ENCODE measurements at regions of chr14 and their contacts with region 1.

Region 1: GRCh38 chr14:55026793-55027561 is at the starts of genes SOCS4 and WDHD1:
- DNase-seq: peak; percentile 82
- ATAC-seq: peak; percentile 84
- H3K4me3 ChIP-seq: peak within 1 kb of the TSS; percentile 78
- H3K27ac ChIP-seq: peak within 1 kb of the TSS; percentile 91
- H3K4me1 ChIP-seq: no peaks in the 10 kb centered on the region
- H3K27me3 ChIP-seq: no peaks in the 10 kb centered on the region
- CTCF ChIP-seq: 0 out of 6 replicates have a peak, but pooled peaks of 1 of the 3 experiments have one; percentile 1
- EP300 ChIP-seq: no peak; a peak in 2 of 4 replicates
- POLR2A ChIP-seq: peak; percentile 96
- RAD21 ChIP-seq: no peak
- polyA plus RNA-seq, gene SOCS4: 5.7 to 7.6 TPM
- polyA plus RNA-seq, gene WDHD1: 11.3 to 14.8 TPM

Region 2: GRCh38 chr14:54329082-54329695 is 697.8 kb before region 1 on chr14:
- CTCF ChIA-PET with region 1: no interaction called
- POLR2A ChIA-PET with region 1: no interaction called
- RAD21 ChIA-PET with region 1: no interaction called
- SMC1A ChIA-PET with region 1: no interaction called
- in situ Hi-C with region 1: no loop called
- intact Hi-C with region 1: no loop called
- DNase-seq: no peak
- ATAC-seq: peak; percentile 86
- H3K4me3 ChIP-seq: no peak overlapping the region
- H3K27ac ChIP-seq: no peak overlapping the region
- H3K4me1 ChIP-seq: no peaks in the 10 kb centered on the region
- H3K27me3 ChIP-seq: no peaks in the 10 kb centered on the region; a peak in 1 of 4 replicates
- CTCF ChIP-seq: peak; percentile 75 to 86 (median 79)
- EP300 ChIP-seq: no peak
- POLR2A ChIP-seq: no peak
- RAD21 ChIP-seq: peak; percentile 87

Region 3: GRCh38 chr14:54698966-54699530 is 327.9 kb before region 1 on chr14:
- CTCF ChIA-PET with region 1: no interaction called
- POLR2A ChIA-PET with region 1: no interaction called
- RAD21 ChIA-PET with region 1: no interaction called
- SMC1A ChIA-PET with region 1: no interaction called
- in situ Hi-C with region 1: no loop called
- intact Hi-C with region 1: no loop called
- DNase-seq: no peak
- ATAC-seq: no peak
- H3K4me3 ChIP-seq: no peak overlapping the region
- H3K27ac ChIP-seq: no peak overlapping the region
- H3K4me1 ChIP-seq: no peaks in the 10 kb centered on the region
- H3K27me3 ChIP-seq: no peaks in the 10 kb centered on the region
- CTCF ChIP-seq: no peak
- EP300 ChIP-seq: no peak
- POLR2A ChIP-seq: no peak
- RAD21 ChIP-seq: no peak

Region 4: DNA sequence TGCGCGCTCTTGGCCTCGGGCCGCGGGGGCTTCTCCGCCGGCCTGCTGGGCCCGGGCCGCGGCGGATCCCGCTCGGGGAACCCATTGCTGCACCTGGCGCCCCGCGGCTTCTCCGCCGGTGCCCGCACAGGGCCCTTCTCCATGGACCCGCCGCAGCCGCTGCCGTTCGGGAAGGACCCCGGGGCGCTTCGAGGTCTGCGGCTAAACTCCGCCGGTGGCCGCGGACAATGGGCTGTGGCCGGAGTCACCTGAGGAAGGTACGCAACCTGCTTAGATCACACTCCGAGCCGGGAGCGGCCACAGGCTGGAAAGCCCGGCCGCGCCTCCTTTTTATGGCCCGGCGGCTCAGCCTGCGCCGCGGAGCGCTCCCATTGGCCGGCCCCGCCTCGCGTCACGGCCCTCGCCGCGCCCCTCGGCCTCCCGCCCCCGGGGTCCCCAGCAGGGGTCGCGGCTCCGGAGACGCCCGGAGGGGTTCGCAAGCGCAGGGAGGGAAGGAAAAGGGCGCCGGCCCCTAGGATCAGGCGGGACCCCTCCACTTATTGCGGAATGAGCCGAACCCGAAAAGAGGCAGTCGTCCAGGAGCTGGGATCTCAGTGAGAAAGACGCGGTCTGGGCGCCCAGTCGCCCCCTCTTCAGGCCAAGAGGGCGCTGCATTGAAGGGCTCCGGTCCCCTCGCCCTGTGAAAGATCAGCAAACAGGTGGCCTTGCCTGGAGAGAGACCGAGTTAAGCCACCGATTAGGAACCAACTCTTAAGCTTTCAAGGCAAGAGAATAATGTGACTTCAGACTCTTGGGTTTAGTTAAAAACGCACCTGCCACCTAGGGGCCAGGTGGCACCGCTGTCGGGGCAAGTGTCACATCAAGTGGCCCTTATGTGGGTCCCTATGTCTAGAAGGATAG is 124.2 kb before region 1 on chr14 and contains the start of gene GCH1:
- CTCF ChIA-PET with region 1: interaction called, 3 read pairs
- POLR2A ChIA-PET with region 1: interaction called, 3 read pairs
- RAD21 ChIA-PET with region 1: no interaction called
- SMC1A ChIA-PET with region 1: interaction called, 3 read pairs
- in situ Hi-C with region 1: no loop called
- intact Hi-C with region 1: loop called (anchors 5 kb)
- DNase-seq: no peak
- ATAC-seq: peak; percentile 90
- H3K4me3 ChIP-seq: peak within 1 kb of the TSS; percentile 73
- H3K27ac ChIP-seq: peak within 1 kb of the TSS; percentile 76
- H3K4me1 ChIP-seq: peaks cover 3% of the 10 kb centered on the region
- H3K27me3 ChIP-seq: no peaks in the 10 kb centered on the region
- CTCF ChIP-seq: peak; percentile 34 to 51 (median 45)
- EP300 ChIP-seq: no peak
- POLR2A ChIP-seq: peak; percentile 99
- RAD21 ChIP-seq: peak; percentile 30; the same call in 1 of the 2 replicates
- polyA plus RNA-seq, gene GCH1: 25.1 to 26.0 TPM

Region 5: DNA sequence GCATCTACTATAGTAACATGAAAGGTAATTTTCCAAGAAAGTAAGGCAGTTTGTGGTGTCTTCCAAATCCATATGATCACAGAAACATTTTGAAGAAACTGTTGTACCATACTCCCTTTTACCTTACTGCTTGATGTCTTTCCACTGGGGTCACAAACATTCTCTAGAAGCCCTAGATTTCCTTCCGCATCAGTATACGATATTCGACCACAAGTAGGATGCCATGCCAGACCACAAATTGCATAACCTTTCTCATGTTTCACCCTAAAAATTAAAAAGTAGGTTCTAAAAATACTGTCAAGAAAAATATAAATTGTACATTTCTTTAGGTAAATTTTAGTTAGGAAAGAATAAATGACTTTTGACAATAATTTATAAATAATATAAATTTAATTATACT is 26.6 kb before region 1 on chr14:
- CTCF ChIA-PET with region 1: no interaction called
- POLR2A ChIA-PET with region 1: no interaction called
- RAD21 ChIA-PET with region 1: no interaction called
- SMC1A ChIA-PET with region 1: no interaction called
- in situ Hi-C with region 1: no loop called
- intact Hi-C with region 1: no loop called
- DNase-seq: no peak
- ATAC-seq: no peak
- H3K4me3 ChIP-seq: no peak overlapping the region
- H3K27ac ChIP-seq: no peak overlapping the region
- H3K4me1 ChIP-seq: no peaks in the 10 kb centered on the region
- H3K27me3 ChIP-seq: no peaks in the 10 kb centered on the region
- CTCF ChIP-seq: no peak
- EP300 ChIP-seq: no peak
- POLR2A ChIP-seq: no peak
- RAD21 ChIP-seq: no peak

Region 6: DNA sequence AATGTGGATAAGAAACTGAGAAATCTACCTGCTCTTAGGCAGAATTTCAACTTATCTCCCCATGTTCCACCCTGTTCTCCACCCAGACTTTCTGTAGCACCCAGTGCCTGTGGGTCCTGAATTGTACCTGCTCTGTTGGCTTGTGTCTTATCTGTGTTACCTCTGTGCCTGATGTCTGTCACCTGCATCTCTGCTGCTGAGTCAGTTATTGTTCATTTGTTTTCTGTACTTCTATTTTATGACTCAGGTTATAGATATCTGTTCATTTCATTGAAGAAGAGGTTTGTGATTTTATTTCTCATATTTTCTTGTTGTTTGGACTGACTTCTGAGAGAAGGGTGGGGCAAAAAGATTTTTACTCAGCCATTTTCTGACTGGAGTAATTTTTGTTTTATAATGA is 11.7 kb after region 1 on chr14:
- CTCF ChIA-PET with region 1: interaction called, 44 read pairs
- POLR2A ChIA-PET with region 1: interaction called, 5 read pairs
- RAD21 ChIA-PET with region 1: interaction called, 68 read pairs
- SMC1A ChIA-PET with region 1: interaction called, 42 read pairs
- in situ Hi-C with region 1: no loop called
- intact Hi-C with region 1: no loop called
- DNase-seq: no peak
- ATAC-seq: peak; percentile 19; the same call in 1 of the 3 replicates
- H3K4me3 ChIP-seq: no peak overlapping the region
- H3K27ac ChIP-seq: no peak overlapping the region
- H3K4me1 ChIP-seq: no peaks in the 10 kb centered on the region
- H3K27me3 ChIP-seq: no peaks in the 10 kb centered on the region
- CTCF ChIP-seq: no peak
- EP300 ChIP-seq: no peak
- POLR2A ChIP-seq: no peak
- RAD21 ChIP-seq: no peak

Region 7: GRCh38 chr14:55045087-55045486 is 18.1 kb after region 1 on chr14:
- CTCF ChIA-PET with region 1: interaction called, 44 read pairs
- POLR2A ChIA-PET with region 1: interaction called, 11 read pairs
- RAD21 ChIA-PET with region 1: interaction called, 68 read pairs
- SMC1A ChIA-PET with region 1: interaction called, 42 read pairs
- in situ Hi-C with region 1: no loop called
- intact Hi-C with region 1: no loop called
- DNase-seq: no peak
- ATAC-seq: peak; percentile 82
- H3K4me3 ChIP-seq: no peak overlapping the region
- H3K27ac ChIP-seq: peak overlapping the region; percentile 19; the same call in 1 of the 2 replicates
- H3K4me1 ChIP-seq: 0 out of 2 replicates have a peak, but pooled peaks cover 4% of the 10 kb centered on the region
- H3K27me3 ChIP-seq: no peaks in the 10 kb centered on the region
- CTCF ChIP-seq: no peak
- EP300 ChIP-seq: no peak
- POLR2A ChIP-seq: no peak
- RAD21 ChIP-seq: no peak

Region 8: DNA sequence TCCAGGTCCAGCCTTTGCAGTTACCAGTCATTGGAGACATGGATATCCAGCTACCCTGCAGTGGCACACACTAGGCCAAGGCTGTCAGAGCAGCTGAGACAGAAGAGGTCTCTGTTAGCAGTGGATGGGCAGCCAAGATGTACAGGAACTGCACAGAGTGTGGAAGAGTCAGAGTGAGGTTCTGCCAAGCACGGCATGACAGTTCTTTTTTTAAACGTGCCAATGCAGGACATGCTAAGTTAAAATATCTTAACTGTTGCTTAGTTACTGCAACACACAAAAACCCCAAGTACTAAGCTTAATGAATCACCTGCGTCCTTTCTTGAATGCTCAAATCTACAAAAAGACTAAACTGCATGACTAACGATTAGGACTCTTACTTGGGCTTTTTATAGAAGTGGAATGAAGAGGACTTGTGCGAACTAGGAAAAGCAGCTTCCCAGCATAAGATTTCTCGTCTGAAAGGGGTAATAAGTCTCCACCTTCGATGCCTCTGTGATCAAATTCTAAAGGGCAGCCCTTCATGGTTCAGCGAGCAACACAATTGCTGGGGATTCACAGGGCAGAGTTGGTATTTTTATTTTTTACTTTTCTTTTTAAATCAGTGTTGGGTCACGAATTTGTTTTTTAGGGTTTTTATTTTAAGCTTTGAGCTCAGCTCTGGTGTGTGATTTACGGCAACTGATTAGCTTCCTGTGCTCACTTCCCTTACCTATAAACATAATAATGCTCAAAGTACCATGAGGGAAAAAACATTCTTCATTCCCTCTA is 45.1 kb after region 1 on chr14:
- CTCF ChIA-PET with region 1: interaction called, 6 read pairs
- POLR2A ChIA-PET with region 1: interaction called, 12 read pairs
- RAD21 ChIA-PET with region 1: interaction called, 14 read pairs
- SMC1A ChIA-PET with region 1: interaction called, 6 read pairs
- in situ Hi-C with region 1: no loop called
- intact Hi-C with region 1: no loop called
- DNase-seq: peak; percentile 92
- ATAC-seq: peak; percentile 76
- H3K4me3 ChIP-seq: 0 out of 2 replicates have a peak overlapping the region, but pooled peaks have one; percentile 28
- H3K27ac ChIP-seq: peak overlapping the region; percentile 82
- H3K4me1 ChIP-seq: peaks cover 54% of the 10 kb centered on the region
- H3K27me3 ChIP-seq: no peaks in the 10 kb centered on the region
- CTCF ChIP-seq: no peak
- EP300 ChIP-seq: peak in 1 of 2 experiments; percentile 51; a peak in 2 of 4 replicates
- POLR2A ChIP-seq: peak; percentile 50; the same call in 1 of the 2 replicates
- RAD21 ChIP-seq: no peak

Region 9: GRCh38 chr14:55285048-55285652 is 258.2 kb after region 1 on chr14:
- CTCF ChIA-PET with region 1: no interaction called
- POLR2A ChIA-PET with region 1: no interaction called
- RAD21 ChIA-PET with region 1: no interaction called
- SMC1A ChIA-PET with region 1: no interaction called
- in situ Hi-C with region 1: no loop called
- intact Hi-C with region 1: no loop called
- DNase-seq: no peak
- ATAC-seq: no peak
- H3K4me3 ChIP-seq: no peak overlapping the region
- H3K27ac ChIP-seq: no peak overlapping the region
- H3K4me1 ChIP-seq: 0 out of 2 replicates have a peak, but pooled peaks cover under 1% of the 10 kb centered on the region
- H3K27me3 ChIP-seq: no peaks in the 10 kb centered on the region
- CTCF ChIP-seq: no peak
- EP300 ChIP-seq: no peak
- POLR2A ChIP-seq: no peak
- RAD21 ChIP-seq: no peak